Activated CD4-positive, alpha-beta memory T cell treated with anti-CD3 and anti-CD28 coated beads for 36 hours (primary cell): ENCODE measurements at regions of chr1 and their contacts with region 1.

Region 1: GRCh38 chr1:198549866-198550265 is 9.4 kb upstream of the ATP6V1G3 start:
- DNase-seq: no peak
- H3K4me3 Mint-ChIP-seq: no peak overlapping the region
- H3K27ac Mint-ChIP-seq: no peak overlapping the region
- H3K4me1 Mint-ChIP-seq: peaks cover 40% of the 10 kb centered on the region
- H3K27me3 Mint-ChIP-seq: no peaks in the 10 kb centered on the region

Region 2: GRCh38 chr1:198534548-198535418 is 15.1 kb before region 1 on chr1:
- CTCF ChIA-PET with region 1: interaction called, 3 read pairs
- POLR2A ChIA-PET with region 1: no interaction called
- intact Hi-C with region 1: loop called (anchors 2 kb)
- DNase-seq: no peak
- H3K4me3 Mint-ChIP-seq: peak overlapping the region; percentile 36
- H3K27ac Mint-ChIP-seq: peak overlapping the region; percentile 73
- H3K4me1 Mint-ChIP-seq: peaks cover 68% of the 10 kb centered on the region
- H3K27me3 Mint-ChIP-seq: no peaks in the 10 kb centered on the region

Region 3: DNA sequence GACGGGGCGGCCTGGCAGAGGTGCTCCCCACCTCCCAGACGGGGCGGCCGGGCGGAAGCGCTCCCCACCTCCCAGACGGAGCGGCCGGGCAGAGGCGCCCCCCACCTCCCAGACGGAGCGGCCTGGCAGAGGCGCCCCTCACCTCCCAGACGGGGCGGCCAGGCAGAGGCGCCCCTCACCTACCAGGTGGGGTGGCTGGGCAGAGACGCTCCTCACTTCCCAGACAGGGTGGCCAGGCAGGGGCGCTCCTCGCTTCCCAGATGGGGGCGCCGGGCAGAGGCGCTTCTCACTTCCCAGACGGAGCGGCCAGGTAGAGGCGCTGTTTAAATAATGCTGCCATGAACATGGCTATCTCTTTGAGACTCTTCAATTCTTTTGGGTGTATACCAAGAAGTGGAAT is 34.3 kb after region 1 on chr1:
- CTCF ChIA-PET with region 1: no interaction called
- POLR2A ChIA-PET with region 1: no interaction called
- intact Hi-C with region 1: no loop called
- DNase-seq: no peak
- H3K4me3 Mint-ChIP-seq: no peak overlapping the region
- H3K27ac Mint-ChIP-seq: no peak overlapping the region
- H3K4me1 Mint-ChIP-seq: no peaks in the 10 kb centered on the region
- H3K27me3 Mint-ChIP-seq: no peaks in the 10 kb centered on the region